ENCODE measurements at regions of chr2 and their contacts with region 1.

Region 1: DNA sequence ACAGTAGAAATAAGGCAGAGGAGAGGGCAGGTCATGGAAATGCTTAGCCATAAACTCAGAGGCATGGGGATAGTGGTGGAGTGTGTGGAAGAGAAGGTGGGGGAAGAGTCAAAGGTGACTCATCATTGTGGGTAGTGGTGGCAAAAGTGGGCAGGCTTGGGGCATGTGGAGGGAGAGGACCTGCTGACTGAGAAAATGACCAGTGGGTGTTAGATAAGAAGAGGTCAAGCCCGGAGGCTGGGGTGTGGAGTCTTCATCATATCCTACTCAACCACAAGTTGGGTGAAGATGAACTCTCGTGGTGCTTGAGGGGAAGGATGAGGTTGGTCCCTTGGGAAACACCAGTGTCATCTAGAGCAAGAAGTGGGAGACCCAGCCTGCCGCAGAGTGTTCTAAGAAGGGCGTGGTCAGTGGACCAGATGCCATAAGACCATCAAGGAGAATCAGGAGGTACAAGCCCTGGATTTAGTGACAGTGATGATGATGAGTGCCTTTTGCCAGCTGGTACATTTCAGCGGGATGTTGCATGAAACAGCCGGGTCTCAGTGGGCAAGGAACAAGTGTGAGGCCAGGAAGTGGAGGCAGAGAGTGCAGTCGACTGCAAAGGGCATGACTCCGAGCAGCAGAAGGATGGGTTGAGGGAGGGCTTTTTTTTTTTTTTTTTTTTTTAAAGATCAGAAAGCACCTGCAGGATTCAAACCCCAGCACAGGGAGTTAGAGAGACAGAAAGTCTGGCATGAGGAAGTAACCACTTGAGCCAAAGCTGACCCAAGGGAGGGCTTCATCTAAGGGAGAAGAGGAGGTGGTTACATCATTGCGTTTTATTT is 122.6 kb upstream of the SPRED2 start:
- DNase-seq: no peak
- ATAC-seq: no peak
- H3K4me3 ChIP-seq: no peak overlapping the region
- H3K27ac ChIP-seq: no peak overlapping the region
- H3K4me1 ChIP-seq: no peaks in the 10 kb centered on the region
- H3K27me3 ChIP-seq: no peaks in the 10 kb centered on the region
- CTCF ChIP-seq: no peak

Region 2: DNA sequence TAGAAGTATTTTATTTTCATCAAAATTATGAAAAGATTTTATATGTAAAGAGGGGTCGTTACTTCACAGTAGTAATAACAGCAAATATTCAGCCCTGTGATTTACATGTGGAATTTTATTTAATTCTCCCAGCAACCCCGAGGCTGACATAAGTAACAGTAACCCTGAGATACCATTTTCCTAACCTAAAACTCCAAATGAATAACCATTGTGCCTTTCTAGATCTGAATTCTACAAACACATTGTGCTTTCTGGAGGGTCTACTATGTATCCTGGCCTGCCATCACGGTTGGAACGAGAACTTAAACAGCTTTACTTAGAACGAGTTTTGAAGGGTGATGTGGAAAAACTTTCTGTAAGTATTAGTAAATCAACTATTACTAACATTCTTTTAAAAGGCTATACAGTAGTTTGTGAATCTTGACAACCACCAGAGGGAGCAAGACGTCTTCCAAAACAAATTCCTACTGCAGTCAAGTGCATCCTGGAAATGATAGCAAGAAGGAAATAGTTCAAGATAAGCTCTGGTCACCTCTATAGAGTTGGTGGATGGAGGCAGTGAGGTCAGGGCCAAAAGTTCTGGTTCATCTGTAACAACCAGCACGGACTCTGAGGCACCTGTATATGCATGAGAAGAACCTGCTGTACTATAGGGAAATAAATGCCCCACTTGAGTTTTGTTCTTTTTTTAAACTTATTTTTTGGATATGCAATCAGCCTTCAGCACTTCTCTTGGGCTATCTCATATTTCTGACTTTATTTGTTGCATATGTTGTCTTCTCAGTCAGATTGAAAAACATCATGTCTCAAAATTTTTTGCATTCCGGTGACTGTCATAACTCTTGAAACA is 289.9 kb before region 1 on chr2:
- intact Hi-C with region 1: loop called in 2 of 3 experiments (anchors 5 to 10 kb)
- DNase-seq: peak in 3 of 6 donors; percentile 24 to 49 (median 28)
- ATAC-seq: peak; percentile 87 to 91 (median 89)
- H3K4me3 ChIP-seq: no peak overlapping the region
- H3K27ac ChIP-seq: no peak overlapping the region
- H3K4me1 ChIP-seq: no peaks in the 10 kb centered on the region
- H3K27me3 ChIP-seq: no peaks in the 10 kb centered on the region
- CTCF ChIP-seq: peak in 3 of 4 donors; percentile 18 to 54 (median 49)

Region 3: DNA sequence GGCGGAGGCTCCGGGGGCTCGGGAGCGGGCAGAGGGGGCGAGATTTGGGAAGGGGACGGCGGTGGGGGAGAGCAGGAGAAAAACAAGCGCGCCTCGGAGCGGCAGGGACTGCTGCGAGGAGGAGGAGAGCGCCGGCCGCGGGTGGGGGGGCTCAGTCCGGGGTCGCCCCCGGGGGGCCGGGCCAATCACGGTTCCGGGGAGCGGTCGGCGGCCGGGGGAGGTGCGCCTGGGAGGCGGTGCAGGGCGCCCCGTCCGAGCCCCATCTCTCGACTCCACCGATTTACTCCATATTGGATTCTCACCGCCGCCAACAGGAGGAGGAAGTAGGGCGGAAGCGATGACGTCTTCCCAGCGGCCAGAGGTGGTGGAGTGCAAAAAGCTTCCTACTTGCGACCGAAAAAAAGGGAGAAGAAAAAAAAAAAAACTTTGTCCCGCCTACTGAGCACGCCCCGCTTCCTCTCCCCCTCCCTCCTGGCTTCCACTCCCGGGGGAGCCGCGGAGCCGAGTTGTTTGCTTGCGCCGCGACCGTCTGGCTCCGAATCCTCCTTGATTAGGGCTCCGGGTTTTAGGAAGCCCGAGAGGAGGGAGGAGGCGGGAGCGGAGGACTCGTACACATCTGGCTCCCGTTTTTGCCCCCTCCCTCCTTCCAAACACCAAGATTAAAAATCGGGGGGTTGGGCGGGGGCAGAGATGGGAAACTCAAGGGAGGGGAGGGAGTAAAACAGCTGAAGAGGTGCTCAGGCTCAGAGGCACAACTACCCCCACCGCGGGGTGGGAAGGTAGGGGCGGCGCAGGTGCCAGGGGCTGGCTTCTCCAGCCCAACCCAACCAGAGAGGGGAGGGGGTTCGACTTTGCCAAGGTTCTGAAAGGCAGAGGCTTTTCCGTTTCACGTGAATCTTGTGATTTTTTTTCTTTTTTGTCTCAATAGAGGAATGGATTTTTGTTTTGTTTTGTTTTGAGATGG is 122.5 kb before region 1 on chr2 and contains the start of gene SPRED2:
- intact Hi-C with region 1: loop called in 1 of 3 experiments (anchors 10 kb)
- DNase-seq: peak; percentile 90 to 96 (median 94)
- ATAC-seq: peak; percentile 66 to 76 (median 71)
- H3K4me3 ChIP-seq: peak within 1 kb of the TSS; percentile 73 to 93 (median 89)
- H3K27ac ChIP-seq: peak within 1 kb of the TSS; percentile 90 to 95 (median 92)
- H3K4me1 ChIP-seq: peaks cover 14 to 20% (median 19%) of the 10 kb centered on the region in 3 donors
- H3K27me3 ChIP-seq: no peaks in the 10 kb centered on the region
- CTCF ChIP-seq: no peak
- total RNA-seq, gene SPRED2: 13.8 to 20.0 (median 16.3) TPM

Region 4: DNA sequence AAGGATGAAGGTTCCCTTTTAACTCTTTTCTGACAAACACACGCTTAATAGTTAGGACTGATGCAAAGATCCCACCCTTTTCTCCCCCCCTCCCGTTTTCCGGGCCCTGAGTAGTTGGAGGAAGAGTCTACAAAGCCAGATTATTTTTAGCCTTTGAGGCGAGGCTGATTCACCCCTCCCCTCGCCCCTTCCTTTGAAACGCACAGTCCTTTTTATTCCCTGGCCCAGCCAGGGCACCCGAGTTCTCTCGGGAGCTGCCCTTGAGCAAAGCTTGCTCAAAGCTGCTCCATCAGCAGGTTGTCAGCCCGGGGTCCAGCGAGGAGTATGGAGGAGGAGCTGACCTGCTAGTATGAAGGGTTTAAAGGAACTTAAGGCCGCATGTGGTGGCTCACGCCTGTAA is 75.5 kb before region 1 on chr2:
- intact Hi-C with region 1: no loop called
- DNase-seq: no peak
- ATAC-seq: no peak
- H3K4me3 ChIP-seq: no peak overlapping the region
- H3K27ac ChIP-seq: no peak overlapping the region
- H3K4me1 ChIP-seq: no peaks in the 10 kb centered on the region
- H3K27me3 ChIP-seq: no peaks in the 10 kb centered on the region
- CTCF ChIP-seq: no peak